ENCODE measurements at regions of chr4 and their contacts with region 1.

Region 1: GRCh38 chr4:88514557-88515511 is 8.7 kb downstream of the PYURF start:
- DNase-seq: no peak
- ATAC-seq: no peak
- H3K4me3 ChIP-seq: no peak overlapping the region
- H3K27ac ChIP-seq: no peak overlapping the region
- H3K4me1 ChIP-seq: peaks cover 0 to 5% (median 0%) of the 10 kb centered on the region in 9 donors
- H3K27me3 ChIP-seq: no peaks in the 10 kb centered on the region
- CTCF ChIP-seq: no peak

Region 2: GRCh38 chr4:88033309-88033708 is 481.5 kb before region 1 on chr4:
- intact Hi-C with region 1: loop called in 3 of 10 experiments (anchors 10 kb)
- DNase-seq: peak in 1 of 2 donors; percentile 54
- ATAC-seq: peak in 5 of 8 donors; percentile 29 to 60 (median 47)
- H3K4me3 ChIP-seq: no peak overlapping the region
- H3K27ac ChIP-seq: no peak overlapping the region
- H3K4me1 ChIP-seq: peaks cover 0 to 10% (median under 1%) of the 10 kb centered on the region in 9 donors
- H3K27me3 ChIP-seq: no peaks in the 10 kb centered on the region
- CTCF ChIP-seq: peak; percentile 42 to 82 (median 67)

Region 3: DNA sequence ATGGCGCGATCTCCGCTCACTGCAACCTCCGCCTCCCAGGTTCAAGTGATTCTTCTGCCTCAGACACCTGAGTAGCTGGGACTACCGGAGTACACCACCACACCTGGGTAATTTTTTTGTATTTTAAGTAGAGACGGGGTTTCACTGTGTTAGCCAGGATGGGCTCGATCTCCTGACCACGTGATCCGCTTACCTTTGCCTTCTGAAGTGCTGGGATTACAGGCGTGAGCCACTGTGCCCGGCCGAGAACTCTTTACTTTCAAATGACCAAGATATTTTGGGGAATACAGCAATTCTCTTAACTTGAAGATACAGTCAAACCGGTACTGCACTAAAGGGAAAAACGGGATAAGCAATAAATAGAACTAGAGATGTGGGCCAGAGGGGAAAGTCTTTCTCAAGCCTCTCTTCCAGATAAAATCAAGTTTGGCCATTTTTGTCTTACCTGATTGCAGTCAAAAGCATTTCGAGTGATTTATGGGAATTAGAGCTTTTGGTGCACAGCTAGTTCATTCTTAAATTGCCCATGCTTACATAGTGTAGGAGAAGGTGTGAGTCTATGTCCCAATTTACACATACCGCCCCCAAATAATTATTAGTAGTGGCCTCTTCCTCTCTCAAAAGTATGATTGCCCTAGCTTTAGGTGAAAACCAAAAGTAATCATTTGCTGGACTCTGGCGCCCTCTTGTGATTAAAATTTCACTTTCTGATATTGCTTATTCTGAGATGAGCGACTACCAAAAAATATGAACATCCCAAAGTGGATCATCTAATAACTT is 303.2 kb before region 1 on chr4:
- intact Hi-C with region 1: loop called in 3 of 10 experiments (anchors 5 kb)
- DNase-seq: peak in 1 of 2 donors; percentile 56
- ATAC-seq: peak in 7 of 8 donors; percentile 38 to 77 (median 70)
- H3K4me3 ChIP-seq: no peak overlapping the region
- H3K27ac ChIP-seq: no peak overlapping the region
- H3K4me1 ChIP-seq: peaks cover 0 to 4% (median 0%) of the 10 kb centered on the region in 9 donors
- H3K27me3 ChIP-seq: no peaks in the 10 kb centered on the region
- CTCF ChIP-seq: peak; percentile 54 to 88 (median 76)

Region 4: DNA sequence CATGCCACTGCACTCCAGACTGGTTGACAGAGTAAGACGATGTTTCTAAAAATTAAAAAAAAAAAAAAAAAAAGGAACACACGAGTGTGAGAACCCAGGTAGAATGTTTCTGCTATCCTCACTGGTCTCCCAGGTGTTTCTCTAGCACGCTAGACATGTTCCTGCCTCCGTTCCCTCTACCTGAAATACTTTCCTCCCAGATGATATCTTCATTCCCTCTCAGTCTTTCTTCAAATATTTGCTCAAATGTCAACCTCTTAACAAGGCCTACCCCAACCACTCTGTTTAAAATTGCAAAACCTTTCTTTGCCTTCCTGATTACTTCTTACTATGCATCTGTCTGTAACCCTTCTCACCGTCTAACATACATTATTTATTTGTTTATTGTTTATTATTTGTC is 296.9 kb before region 1 on chr4:
- intact Hi-C with region 1: loop called (anchors 1 to 5 kb)
- DNase-seq: no peak
- ATAC-seq: no peak
- H3K4me3 ChIP-seq: no peak overlapping the region
- H3K27ac ChIP-seq: no peak overlapping the region
- H3K4me1 ChIP-seq: peaks cover 0 to 3% (median 0%) of the 10 kb centered on the region in 9 donors
- H3K27me3 ChIP-seq: no peaks in the 10 kb centered on the region
- CTCF ChIP-seq: no peak

Region 5: DNA sequence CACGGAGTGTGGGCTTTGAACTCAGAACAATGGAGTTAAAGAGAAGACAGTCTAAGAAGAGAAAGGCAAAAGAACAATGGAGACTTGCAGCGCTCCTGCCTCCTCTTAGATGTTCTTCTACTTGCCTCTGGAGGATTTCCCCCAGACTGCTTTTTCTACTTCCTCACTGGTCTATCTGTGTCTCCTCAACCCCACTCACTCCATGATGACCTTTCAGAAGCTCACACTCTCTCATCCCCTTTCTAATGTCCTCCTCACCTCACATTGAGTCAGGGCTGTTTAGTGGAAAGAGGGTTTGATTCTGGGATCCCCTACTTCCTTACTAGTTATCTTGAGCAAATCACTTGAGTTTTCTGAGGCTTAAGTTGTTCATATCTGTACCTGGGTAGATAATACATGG is 148.4 kb before region 1 on chr4:
- intact Hi-C with region 1: loop called in 8 of 10 experiments (anchors 5 to 10 kb)
- DNase-seq: no peak
- ATAC-seq: no peak
- H3K4me3 ChIP-seq: no peak overlapping the region
- H3K27ac ChIP-seq: no peak overlapping the region
- H3K4me1 ChIP-seq: peaks cover 0 to 6% (median 0%) of the 10 kb centered on the region in 9 donors
- H3K27me3 ChIP-seq: no peaks in the 10 kb centered on the region
- CTCF ChIP-seq: no peak

Region 6: DNA sequence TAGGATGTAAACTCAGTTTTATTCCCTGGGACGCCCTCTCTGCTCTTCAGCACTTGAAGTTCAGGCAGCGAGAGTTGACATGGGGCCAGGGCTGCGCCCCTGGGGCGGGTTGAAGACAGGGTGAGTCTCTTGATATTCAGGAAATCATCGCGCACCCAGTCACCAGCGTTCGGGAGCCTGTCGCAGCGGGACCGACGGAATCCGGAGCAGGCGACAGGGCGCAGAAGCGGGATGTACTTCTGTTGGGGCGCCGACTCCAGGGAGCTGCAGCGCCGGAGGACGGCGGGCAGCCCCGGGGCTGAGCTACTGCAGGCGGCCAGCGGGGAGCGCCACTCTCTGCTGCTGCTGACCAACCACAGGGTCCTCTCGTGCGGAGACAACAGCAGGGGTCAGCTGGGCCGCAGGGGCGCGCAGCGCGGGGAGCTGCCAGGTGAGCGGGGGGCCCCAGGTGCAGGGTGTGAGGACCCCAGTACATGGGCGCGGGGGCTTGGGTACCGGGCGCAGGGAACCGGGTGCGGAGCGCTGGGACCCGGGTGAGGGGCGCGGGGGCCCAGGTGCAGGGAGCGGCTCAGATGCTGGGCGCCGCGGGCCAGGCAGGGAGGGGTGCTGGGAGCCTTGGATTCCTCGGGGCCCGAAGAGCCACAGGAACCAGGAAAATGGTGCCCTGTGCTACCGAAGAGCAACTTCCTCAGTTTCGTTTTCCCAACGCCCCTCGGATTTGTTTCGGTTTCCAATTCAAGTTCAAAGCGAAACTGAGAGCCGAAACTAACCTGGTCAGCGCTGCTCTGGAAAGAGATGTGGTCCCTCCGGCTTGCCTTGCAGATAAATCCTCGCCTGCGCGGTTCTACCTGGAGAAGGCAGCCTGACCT is 135.9 kb before region 1 on chr4 and contains the start of gene HERC6:
- intact Hi-C with region 1: loop called in 6 of 10 experiments (anchors 5 to 10 kb)
- DNase-seq: peak; percentile 74 to 85
- ATAC-seq: peak; percentile 94 to 98 (median 96)
- H3K4me3 ChIP-seq: peak within 1 kb of the TSS; percentile 91 to 100 (median 96)
- H3K27ac ChIP-seq: peak within 1 kb of the TSS; percentile 95 to 100 (median 98)
- H3K4me1 ChIP-seq: peaks cover 0 to 14% (median 0%) of the 10 kb centered on the region in 9 donors
- H3K27me3 ChIP-seq: no peaks in the 10 kb centered on the region
- CTCF ChIP-seq: peak; percentile 50 to 89 (median 80)
- total RNA-seq, gene HERC6: 8.9 to 20.0 (median 15.8) TPM

Region 7: DNA sequence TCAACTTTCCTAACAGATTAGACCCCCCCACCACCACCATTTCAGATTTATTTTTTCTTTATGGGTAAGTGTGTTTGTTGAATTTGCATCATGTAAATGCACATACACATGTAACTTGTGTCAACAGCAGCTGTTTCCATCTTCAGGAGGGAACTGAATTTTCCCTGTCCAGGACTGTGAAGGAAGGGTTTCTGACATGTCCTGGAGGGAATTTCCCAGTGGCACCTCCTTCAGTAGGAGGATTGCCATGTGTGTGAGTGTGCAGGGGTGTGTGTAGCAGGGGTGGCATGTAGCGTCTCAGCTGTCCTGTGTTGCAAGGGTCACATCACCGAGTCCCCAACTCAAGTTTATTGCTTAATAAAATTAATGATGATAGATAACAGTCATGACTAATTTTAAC is 116.5 kb before region 1 on chr4:
- intact Hi-C with region 1: loop called in 1 of 10 experiments (anchors 10 kb)
- DNase-seq: no peak
- ATAC-seq: no peak
- H3K4me3 ChIP-seq: no peak overlapping the region
- H3K27ac ChIP-seq: no peak overlapping the region
- H3K4me1 ChIP-seq: no peaks in the 10 kb centered on the region
- H3K27me3 ChIP-seq: no peaks in the 10 kb centered on the region
- CTCF ChIP-seq: no peak

Region 8: DNA sequence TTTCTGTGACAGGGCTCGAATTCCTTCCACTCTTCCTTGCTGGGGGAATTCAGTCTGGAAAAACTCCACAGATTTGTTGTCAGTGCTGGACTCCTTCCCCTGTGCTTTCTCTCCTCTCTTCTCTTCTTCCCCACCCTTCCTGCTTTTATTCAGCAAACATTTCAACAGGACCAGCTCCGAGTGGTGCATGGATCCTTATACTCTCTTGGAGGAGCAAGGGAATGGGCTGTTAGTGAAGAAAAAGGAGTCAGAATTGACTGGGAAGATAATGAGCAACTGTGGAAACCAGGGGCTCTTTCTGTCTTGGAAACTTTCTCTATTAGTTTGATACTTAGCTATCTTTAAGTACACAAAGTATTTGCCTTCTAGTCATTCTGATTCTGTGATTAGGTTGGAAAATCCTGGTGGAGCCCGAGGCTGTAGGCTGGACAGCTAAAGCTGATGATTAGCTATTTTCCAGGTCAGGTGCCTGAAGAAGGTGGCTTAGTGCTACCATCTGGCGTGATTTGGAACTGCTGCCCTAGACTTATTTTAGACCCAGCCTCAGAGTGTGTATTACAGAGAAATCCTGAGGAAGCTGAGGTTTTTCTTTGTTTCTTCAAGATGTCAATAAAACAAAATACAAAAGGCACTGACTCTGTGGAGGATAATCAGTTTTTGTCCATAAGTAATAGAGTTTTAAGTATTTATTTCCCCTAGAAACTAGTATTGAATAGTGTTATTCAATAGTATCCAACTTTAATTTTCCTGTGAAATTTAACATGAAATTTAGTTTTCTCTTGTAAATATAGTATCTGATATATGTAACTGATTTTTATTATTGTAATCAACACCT is 144.4 kb after region 1 on chr4:
- intact Hi-C with region 1: no loop called
- DNase-seq: peak in 1 of 2 donors; percentile 46
- ATAC-seq: peak; percentile 87 to 98 (median 96)
- H3K4me3 ChIP-seq: no peak overlapping the region
- H3K27ac ChIP-seq: peak overlapping the region in 3 of 10 donors; percentile 28 to 44 (median 28)
- H3K4me1 ChIP-seq: peaks cover 0 to 12% (median 0%) of the 10 kb centered on the region in 9 donors
- H3K27me3 ChIP-seq: no peaks in the 10 kb centered on the region
- CTCF ChIP-seq: peak; percentile 39 to 81 (median 75)